ENCODE measurements at regions of chr22 and their contacts with region 1.

Region 1: DNA sequence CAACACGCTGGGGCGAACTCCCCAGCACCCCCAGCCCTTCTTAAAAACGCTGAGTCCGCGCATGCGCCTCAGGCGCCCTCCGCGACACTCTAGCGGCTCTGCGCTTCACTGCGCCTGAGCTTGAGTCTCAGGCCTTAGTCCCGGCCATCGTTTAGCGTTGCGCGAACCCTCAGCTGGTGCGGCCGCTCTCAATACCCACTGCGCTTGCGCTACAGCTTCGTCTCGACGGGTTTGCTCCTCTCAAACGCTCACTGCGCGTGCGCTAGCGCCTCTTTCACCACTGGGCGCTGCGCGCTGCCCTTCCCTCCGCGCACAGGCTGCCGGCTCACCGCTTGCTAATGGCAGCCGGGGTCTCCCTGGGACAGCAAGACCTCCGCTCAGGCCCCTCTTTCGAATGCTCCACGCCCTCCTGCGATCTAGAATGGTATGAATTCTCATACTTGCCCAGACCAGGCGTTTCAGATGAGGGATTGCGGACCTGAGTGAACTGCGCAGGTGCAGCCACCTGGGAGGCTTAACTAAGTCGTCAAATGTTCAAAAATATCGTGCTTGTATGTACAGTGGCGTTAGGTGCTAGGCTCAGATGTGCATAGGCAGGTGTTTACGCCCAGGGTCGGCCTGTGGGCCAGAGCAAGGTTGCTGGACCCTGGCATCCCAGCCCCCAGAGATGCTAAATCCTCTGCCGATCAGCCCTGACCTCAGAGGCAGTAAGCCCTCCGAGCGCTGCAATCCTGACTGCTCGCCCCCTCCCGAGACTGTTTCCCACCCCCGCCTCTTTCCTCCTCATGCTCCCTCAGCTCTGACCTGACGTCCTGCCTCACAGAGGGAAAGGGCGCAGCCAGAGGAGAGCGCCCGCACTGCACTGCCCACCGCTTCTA is at the start of gene SLC2A11:
- DNase-seq: peak; percentile 99
- ATAC-seq: peak; percentile 93
- H3K4me3 ChIP-seq: peak within 1 kb of the TSS; percentile 74 to 94 (median 91)
- H3K4me3 Mint-ChIP-seq: peak within 1 kb of the TSS; percentile 95
- H3K27ac ChIP-seq: peak within 1 kb of the TSS; percentile 78 to 81
- H3K27ac Mint-ChIP-seq: peak within 1 kb of the TSS; percentile 99
- H3K4me1 ChIP-seq: peaks cover 15 to 25% of the 10 kb centered on the region in 2 donors
- H3K4me1 Mint-ChIP-seq: peaks cover 26% of the 10 kb centered on the region
- H3K27me3 ChIP-seq: no peaks in the 10 kb centered on the region
- H3K27me3 Mint-ChIP-seq: no peaks in the 10 kb centered on the region
- CTCF ChIP-seq: peak; percentile 8
- total RNA-seq, gene SLC2A11: 54.3 and 61.5 TPM in 2 replicates

Region 2: DNA sequence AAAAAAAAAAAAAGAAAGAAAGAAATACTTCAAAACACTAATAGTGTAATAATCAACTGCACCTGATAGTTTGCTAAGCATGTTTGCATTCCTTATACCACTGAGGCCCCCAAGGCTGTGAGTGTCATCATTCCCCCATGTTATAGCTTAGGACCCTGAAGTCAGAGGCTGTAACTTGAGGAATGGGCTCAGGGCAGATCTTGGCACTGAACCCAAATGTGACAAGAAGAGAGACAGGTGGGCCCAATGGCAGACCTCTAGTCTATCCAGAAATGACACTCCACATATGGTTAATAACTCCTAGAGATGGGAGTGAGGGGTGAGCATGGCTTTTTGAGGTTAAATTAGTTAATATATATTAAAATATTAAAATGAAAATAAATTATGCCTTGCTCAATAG is 120.1 kb before region 1 on chr22:
- CTCF ChIA-PET with region 1: interaction called, 60 read pairs
- POLR2A ChIA-PET with region 1: no interaction called
- intact Hi-C with region 1: no loop called
- DNase-seq: no peak
- ATAC-seq: no peak
- H3K4me3 ChIP-seq: no peak overlapping the region
- H3K4me3 Mint-ChIP-seq: no peak overlapping the region
- H3K27ac ChIP-seq: no peak overlapping the region
- H3K27ac Mint-ChIP-seq: no peak overlapping the region
- H3K4me1 ChIP-seq: no peaks in the 10 kb centered on the region
- H3K4me1 Mint-ChIP-seq: no peaks in the 10 kb centered on the region
- H3K27me3 ChIP-seq: no peaks in the 10 kb centered on the region
- H3K27me3 Mint-ChIP-seq: no peaks in the 10 kb centered on the region
- CTCF ChIP-seq: no peak

Region 3: DNA sequence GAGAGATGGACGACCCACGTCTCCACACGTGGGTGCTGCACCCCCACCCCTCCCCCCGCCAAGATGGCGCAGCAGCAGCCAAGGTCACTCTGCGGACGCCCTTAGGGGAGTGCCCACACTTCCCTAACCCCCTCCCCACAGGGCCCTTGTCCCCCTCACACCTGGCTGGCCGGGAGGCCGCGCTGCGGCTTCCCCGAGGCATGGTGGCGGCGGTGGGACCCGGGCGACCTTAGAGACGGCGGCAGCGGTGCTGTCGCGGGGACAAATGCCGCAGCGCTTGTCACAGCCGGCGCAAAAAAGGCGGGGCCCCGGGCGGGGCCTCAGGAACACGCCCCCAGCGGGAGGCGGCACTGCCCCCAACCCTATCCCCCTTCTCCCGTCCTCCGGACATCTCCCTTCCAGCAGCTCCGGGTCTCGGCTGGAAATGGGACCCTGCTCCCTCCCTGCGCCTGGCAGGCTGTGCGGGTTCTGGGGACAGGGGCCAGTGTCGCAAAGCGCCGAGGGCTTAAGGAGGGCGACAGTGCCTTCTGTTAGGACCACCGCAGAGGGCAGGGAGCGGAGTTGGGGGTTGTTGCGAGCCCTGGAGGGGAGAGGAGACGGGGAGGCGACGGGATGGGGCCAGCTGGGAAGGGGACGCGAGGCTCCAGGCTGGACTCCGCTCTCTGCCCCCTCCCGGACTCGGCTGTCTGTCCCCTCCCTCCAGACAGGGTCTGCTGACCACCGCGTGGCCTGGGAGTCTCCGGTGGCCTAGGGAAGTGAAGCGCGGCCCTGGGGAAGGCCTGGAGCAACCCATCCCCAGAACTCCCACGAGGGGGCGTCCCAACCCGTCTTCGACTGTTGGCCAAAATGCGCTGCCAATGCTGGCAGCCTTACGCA is 89.9 kb before region 1 on chr22 and contains the start of gene CHCHD10:
- CTCF ChIA-PET with region 1: interaction called, 18 read pairs
- POLR2A ChIA-PET with region 1: interaction called, 18 read pairs
- intact Hi-C with region 1: no loop called
- DNase-seq: peak; percentile 85
- ATAC-seq: peak; percentile 65
- H3K4me3 ChIP-seq: peak within 1 kb of the TSS; percentile 46 to 87 (median 81)
- H3K4me3 Mint-ChIP-seq: peak within 1 kb of the TSS; percentile 89
- H3K27ac ChIP-seq: peak within 1 kb of the TSS; percentile 80 to 89
- H3K27ac Mint-ChIP-seq: peak within 1 kb of the TSS; percentile 90
- H3K4me1 ChIP-seq: peaks cover 61 to 89% of the 10 kb centered on the region in 2 donors
- H3K4me1 Mint-ChIP-seq: peaks cover 66% of the 10 kb centered on the region
- H3K27me3 ChIP-seq: no peaks in the 10 kb centered on the region
- H3K27me3 Mint-ChIP-seq: no peaks in the 10 kb centered on the region
- CTCF ChIP-seq: peak; percentile 73
- total RNA-seq, gene CHCHD10: 54.0 and 57.2 TPM in 2 replicates

Region 4: GRCh38 chr22:23838681-23839468 is 19.0 kb before region 1 on chr22 and contains the start of gene DERL3:
- CTCF ChIA-PET with region 1: interaction called, 10 read pairs
- POLR2A ChIA-PET with region 1: interaction called, 50 read pairs
- intact Hi-C with region 1: no loop called
- DNase-seq: peak; percentile 100
- ATAC-seq: peak; percentile 78
- H3K4me3 ChIP-seq: peak within 1 kb of the TSS; percentile 38 to 83 (median 69)
- H3K4me3 Mint-ChIP-seq: peak within 1 kb of the TSS; percentile 89
- H3K27ac ChIP-seq: peak within 1 kb of the TSS; percentile 98
- H3K27ac Mint-ChIP-seq: peak within 1 kb of the TSS; percentile 99
- H3K4me1 ChIP-seq: peaks cover 45 to 60% of the 10 kb centered on the region in 2 donors
- H3K4me1 Mint-ChIP-seq: peaks cover 73% of the 10 kb centered on the region
- H3K27me3 ChIP-seq: no peaks in the 10 kb centered on the region
- H3K27me3 Mint-ChIP-seq: no peaks in the 10 kb centered on the region
- CTCF ChIP-seq: no peak
- total RNA-seq, gene DERL3: 74.1 and 77.0 TPM in 2 replicates

Region 5: DNA sequence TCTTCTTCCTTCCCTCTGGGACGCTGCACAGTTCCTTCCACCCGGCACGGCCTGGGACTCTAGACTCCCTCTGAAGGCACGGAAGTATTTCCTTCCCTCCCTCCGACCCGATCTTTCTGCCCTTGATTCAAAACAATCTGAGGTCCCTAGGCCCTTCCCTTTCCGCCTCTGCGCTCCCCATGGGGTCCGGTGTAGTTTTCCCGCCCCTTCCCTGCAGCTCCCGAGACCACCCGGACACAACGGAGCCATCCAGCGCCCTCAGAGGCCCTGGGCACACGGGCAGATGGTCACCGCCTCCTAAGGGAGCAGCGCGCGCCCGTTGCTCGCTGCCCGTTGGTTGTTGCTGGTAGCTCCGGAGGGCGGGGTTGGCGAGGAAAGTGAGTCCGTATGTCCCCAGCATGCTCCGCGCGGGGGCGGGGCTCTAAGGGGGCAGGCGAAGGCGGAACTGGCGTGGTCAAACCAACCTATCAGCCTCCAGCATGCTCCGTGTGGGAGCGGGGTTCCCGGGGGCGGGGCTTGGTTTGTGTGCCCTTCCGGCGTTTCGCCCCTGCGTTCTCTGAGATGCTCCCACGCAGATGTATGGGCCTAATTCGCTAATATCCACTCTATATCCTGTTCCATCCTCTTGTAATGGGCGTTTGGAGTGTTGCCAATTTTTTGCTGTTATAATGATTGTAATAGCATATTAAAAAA is 56.0 kb after region 1 on chr22:
- CTCF ChIA-PET with region 1: interaction called, 3 read pairs
- POLR2A ChIA-PET with region 1: interaction called, 6 read pairs
- intact Hi-C with region 1: loop called (anchors 5 kb)
- DNase-seq: peak; percentile 98
- ATAC-seq: peak; percentile 99
- H3K4me3 ChIP-seq: peak overlapping the region; percentile 52 to 96 (median 68)
- H3K4me3 Mint-ChIP-seq: peak overlapping the region; percentile 98
- H3K27ac ChIP-seq: peak overlapping the region; percentile 68 to 92
- H3K27ac Mint-ChIP-seq: peak overlapping the region; percentile 98
- H3K4me1 ChIP-seq: peaks cover 21 to 24% of the 10 kb centered on the region in 2 donors
- H3K4me1 Mint-ChIP-seq: peaks cover 31% of the 10 kb centered on the region
- H3K27me3 ChIP-seq: no peaks in the 10 kb centered on the region
- H3K27me3 Mint-ChIP-seq: no peaks in the 10 kb centered on the region
- CTCF ChIP-seq: no peak

Region 6: DNA sequence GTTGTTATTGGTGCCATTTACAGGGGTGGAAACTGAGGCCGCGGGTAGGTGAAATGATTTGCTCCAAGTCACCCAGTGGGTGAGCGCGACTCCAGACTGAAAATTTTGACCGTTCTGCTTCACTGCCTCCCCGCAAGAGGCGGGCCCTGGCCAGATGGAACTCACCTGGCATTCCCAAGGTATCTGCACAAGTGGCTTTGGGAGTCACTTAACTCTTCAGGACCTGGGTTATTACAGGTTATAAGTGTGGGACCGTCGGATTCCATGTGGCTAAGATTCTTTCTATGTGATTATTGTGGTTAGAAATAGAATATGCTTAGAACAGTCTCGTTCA is 153.9 kb after region 1 on chr22:
- CTCF ChIA-PET with region 1: no interaction called
- POLR2A ChIA-PET with region 1: no interaction called
- intact Hi-C with region 1: no loop called
- DNase-seq: no peak
- ATAC-seq: no peak
- H3K4me3 ChIP-seq: peak overlapping the region; percentile 77 to 88 (median 86)
- H3K4me3 Mint-ChIP-seq: peak overlapping the region; percentile 95
- H3K27ac ChIP-seq: peak overlapping the region in 1 of 2 donors; percentile 80
- H3K27ac Mint-ChIP-seq: peak overlapping the region; percentile 95
- H3K4me1 ChIP-seq: peaks cover 7 to 18% of the 10 kb centered on the region in 2 donors
- H3K4me1 Mint-ChIP-seq: peaks cover 28% of the 10 kb centered on the region
- H3K27me3 ChIP-seq: no peaks in the 10 kb centered on the region
- H3K27me3 Mint-ChIP-seq: no peaks in the 10 kb centered on the region
- CTCF ChIP-seq: no peak